Endothelial cell of umbilical vein (primary cell): ENCODE measurements at regions of chr18 and their contacts with region 1.

Region 1: GRCh38 chr18:22813648-22814328 is 119.3 kb upstream of the RBBP8 start:
- DNase-seq: peak; percentile 56
- H3K4me3 ChIP-seq: no peak overlapping the region
- H3K27ac ChIP-seq: no peak overlapping the region
- H3K4me1 ChIP-seq: peaks cover 11% of the 10 kb centered on the region
- H3K27me3 ChIP-seq: peaks cover 30 to 44% of the 10 kb centered on the region in 2 experiments
- CTCF ChIP-seq: peak; percentile 22 to 46
- POLR2A ChIP-seq: no peak

Region 2: GRCh38 chr18:22348521-22349316 is 465.1 kb before region 1 on chr18:
- CTCF ChIA-PET with region 1: no interaction called
- POLR2A ChIA-PET with region 1: no interaction called
- dilution Hi-C with region 1: no loop called
- intact Hi-C with region 1: no loop called
- DNase-seq: peak; percentile 56
- H3K4me3 ChIP-seq: peak overlapping the region in 2 of 3 experiments; percentile 33 to 35
- H3K27ac ChIP-seq: peak overlapping the region; percentile 67
- H3K4me1 ChIP-seq: peaks cover 56% of the 10 kb centered on the region
- H3K27me3 ChIP-seq: no peaks in the 10 kb centered on the region
- CTCF ChIP-seq: no peak
- POLR2A ChIP-seq: no peak

Region 3: GRCh38 chr18:22800551-22800951 is 13.2 kb before region 1 on chr18:
- CTCF ChIA-PET with region 1: interaction called, 18 read pairs
- POLR2A ChIA-PET with region 1: no interaction called
- dilution Hi-C with region 1: no loop called
- intact Hi-C with region 1: no loop called
- DNase-seq: no peak
- H3K4me3 ChIP-seq: no peak overlapping the region
- H3K27ac ChIP-seq: no peak overlapping the region
- H3K4me1 ChIP-seq: no peaks in the 10 kb centered on the region
- H3K27me3 ChIP-seq: peaks cover 33 to 48% of the 10 kb centered on the region in 2 experiments
- CTCF ChIP-seq: no peak
- POLR2A ChIP-seq: no peak

Region 4: GRCh38 chr18:22933206-22933957 is 119.6 kb after region 1 on chr18 and contains the start of gene RBBP8:
- CTCF ChIA-PET with region 1: interaction called, 11 read pairs
- POLR2A ChIA-PET with region 1: no interaction called
- dilution Hi-C with region 1: no loop called
- intact Hi-C with region 1: loop called (anchors 5 kb)
- DNase-seq: peak; percentile 84
- H3K4me3 ChIP-seq: peak within 1 kb of the TSS; percentile 41 to 84 (median 54)
- H3K27ac ChIP-seq: peak within 1 kb of the TSS; percentile 73
- H3K4me1 ChIP-seq: peaks cover 21% of the 10 kb centered on the region
- H3K27me3 ChIP-seq: no peaks in the 10 kb centered on the region
- CTCF ChIP-seq: no peak
- POLR2A ChIP-seq: peak; percentile 59
- total RNA-seq, gene RBBP8: 13.5 and 15.4 TPM in 2 replicates

Region 5: DNA sequence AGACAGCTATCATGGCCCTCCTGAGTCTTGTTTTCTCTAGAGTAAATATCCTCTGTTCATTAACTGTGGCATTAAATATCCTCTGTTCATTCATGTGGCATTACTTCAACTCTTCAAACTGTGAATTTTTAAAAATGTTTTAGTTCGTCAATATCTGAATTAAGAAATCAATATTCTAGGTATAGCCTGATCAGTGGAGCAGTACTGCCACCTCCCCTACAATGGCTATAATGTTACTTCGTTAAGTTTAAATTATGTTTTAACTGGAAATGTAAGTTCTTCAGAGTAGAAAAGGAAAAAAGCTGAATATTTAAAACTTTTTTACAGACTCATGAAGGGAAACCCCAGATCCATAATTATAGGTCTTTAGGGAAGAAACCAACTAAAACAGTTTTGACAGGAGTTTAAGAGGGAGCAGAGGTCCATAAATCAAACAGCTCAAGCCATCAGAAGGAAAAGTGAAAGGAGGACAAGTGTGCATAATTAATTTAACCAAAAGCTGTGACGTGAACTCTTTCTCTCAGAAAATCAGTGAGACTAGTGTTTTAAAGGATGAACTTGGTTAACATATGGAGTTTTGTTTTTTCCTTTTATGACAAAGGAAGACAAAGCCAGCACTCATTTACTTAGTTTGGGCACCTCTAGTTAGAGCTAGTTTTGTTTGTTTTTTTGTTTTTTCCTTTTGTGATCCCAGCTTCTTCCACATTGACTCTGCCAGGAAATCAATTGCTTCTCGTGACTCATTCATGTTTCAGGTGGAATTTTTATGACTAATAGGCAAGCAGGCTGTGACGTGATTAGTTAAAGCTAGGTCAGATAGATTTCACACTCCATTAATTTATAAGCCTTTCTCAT is 164.3 kb after region 1 on chr18:
- CTCF ChIA-PET with region 1: interaction called, 139 read pairs
- POLR2A ChIA-PET with region 1: no interaction called
- dilution Hi-C with region 1: no loop called
- intact Hi-C with region 1: loop called (anchors 1 kb)
- DNase-seq: peak; percentile 91
- H3K4me3 ChIP-seq: peak overlapping the region in 1 of 3 experiments; percentile 3
- H3K27ac ChIP-seq: peak overlapping the region; percentile 54
- H3K4me1 ChIP-seq: peaks cover 12% of the 10 kb centered on the region
- H3K27me3 ChIP-seq: no peaks in the 10 kb centered on the region
- CTCF ChIP-seq: no peak
- POLR2A ChIP-seq: no peak

Region 6: GRCh38 chr18:23032030-23032582 is 218.3 kb after region 1 on chr18:
- CTCF ChIA-PET with region 1: interaction called, 6 read pairs
- POLR2A ChIA-PET with region 1: no interaction called
- dilution Hi-C with region 1: no loop called
- intact Hi-C with region 1: loop called (anchors 5 kb)
- DNase-seq: peak; percentile 45
- H3K4me3 ChIP-seq: no peak overlapping the region
- H3K27ac ChIP-seq: peak overlapping the region; percentile 20
- H3K4me1 ChIP-seq: peaks cover 10% of the 10 kb centered on the region
- H3K27me3 ChIP-seq: no peaks in the 10 kb centered on the region
- CTCF ChIP-seq: no peak
- POLR2A ChIP-seq: no peak

Region 7: DNA sequence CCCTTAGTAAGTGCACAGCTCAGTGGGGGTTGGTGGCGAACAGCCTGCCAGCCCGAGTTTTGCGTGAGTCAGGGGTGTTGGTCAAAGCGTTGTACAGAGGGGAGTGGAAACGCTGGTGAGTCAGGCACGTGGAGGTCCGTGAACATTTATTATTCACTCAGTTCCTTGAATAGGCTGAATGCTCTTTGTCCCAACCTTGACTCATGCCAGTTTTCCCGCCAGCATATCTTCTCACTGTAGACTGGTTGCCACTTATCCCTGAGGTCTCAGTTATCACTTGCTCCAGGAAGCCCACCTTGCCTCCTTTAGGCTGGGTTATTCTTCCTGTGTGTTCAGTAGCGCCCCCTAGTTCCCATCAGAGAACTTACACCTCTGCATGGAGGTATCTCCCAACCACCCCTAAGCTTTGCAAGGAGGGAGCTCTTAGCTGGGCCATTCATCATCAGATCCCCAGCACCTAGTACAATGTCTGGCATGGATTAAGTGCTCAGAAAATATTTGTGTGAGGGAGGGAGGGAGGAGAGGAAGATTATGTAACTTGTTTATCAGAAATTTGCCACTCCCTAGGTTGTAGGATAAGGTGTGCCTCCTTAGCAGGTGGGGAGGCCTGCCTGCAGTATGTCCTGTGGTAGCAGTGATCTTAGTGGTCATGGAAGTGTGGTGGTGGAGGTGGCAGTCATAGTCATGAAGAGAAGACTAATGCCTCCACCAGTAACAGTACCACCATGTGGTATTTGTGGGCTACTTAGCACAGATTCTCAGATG is 393.6 kb after region 1 on chr18:
- CTCF ChIA-PET with region 1: no interaction called
- POLR2A ChIA-PET with region 1: no interaction called
- dilution Hi-C with region 1: no loop called
- intact Hi-C with region 1: loop called (anchors 10 kb)
- DNase-seq: peak; percentile 20
- H3K4me3 ChIP-seq: no peak overlapping the region
- H3K27ac ChIP-seq: no peak overlapping the region
- H3K4me1 ChIP-seq: no peaks in the 10 kb centered on the region
- H3K27me3 ChIP-seq: no peaks in the 10 kb centered on the region
- CTCF ChIP-seq: peak; percentile 39 to 52
- POLR2A ChIP-seq: no peak